Right lobe of liver (tissue), 6 donors: ENCODE measurements at regions of chr16 and their contacts with region 1.

Region 1: GRCh38 chr16:63005356-63005755 is 969.1 kb upstream of the CDH8 start:
- DNase-seq: no peak
- ATAC-seq: no peak
- H3K4me3 ChIP-seq: no peak overlapping the region
- H3K27ac ChIP-seq: no peak overlapping the region
- H3K4me1 ChIP-seq: no peaks in the 10 kb centered on the region
- H3K27me3 ChIP-seq: no peaks in the 10 kb centered on the region
- CTCF ChIP-seq: no peak
- POLR2A ChIP-seq: no peak

Region 2: GRCh38 chr16:62940569-62940968 is 64.8 kb before region 1 on chr16:
- intact Hi-C with region 1: loop called in 1 of 2 experiments (anchors 10 kb)
- DNase-seq: no peak
- ATAC-seq: no peak
- H3K4me3 ChIP-seq: no peak overlapping the region
- H3K27ac ChIP-seq: no peak overlapping the region
- H3K4me1 ChIP-seq: no peaks in the 10 kb centered on the region
- H3K27me3 ChIP-seq: no peaks in the 10 kb centered on the region
- CTCF ChIP-seq: no peak
- POLR2A ChIP-seq: no peak